CD8-positive, alpha-beta memory T cell (primary cell): ENCODE measurements at regions of chr2 and their contacts with region 1.

Region 1: DNA sequence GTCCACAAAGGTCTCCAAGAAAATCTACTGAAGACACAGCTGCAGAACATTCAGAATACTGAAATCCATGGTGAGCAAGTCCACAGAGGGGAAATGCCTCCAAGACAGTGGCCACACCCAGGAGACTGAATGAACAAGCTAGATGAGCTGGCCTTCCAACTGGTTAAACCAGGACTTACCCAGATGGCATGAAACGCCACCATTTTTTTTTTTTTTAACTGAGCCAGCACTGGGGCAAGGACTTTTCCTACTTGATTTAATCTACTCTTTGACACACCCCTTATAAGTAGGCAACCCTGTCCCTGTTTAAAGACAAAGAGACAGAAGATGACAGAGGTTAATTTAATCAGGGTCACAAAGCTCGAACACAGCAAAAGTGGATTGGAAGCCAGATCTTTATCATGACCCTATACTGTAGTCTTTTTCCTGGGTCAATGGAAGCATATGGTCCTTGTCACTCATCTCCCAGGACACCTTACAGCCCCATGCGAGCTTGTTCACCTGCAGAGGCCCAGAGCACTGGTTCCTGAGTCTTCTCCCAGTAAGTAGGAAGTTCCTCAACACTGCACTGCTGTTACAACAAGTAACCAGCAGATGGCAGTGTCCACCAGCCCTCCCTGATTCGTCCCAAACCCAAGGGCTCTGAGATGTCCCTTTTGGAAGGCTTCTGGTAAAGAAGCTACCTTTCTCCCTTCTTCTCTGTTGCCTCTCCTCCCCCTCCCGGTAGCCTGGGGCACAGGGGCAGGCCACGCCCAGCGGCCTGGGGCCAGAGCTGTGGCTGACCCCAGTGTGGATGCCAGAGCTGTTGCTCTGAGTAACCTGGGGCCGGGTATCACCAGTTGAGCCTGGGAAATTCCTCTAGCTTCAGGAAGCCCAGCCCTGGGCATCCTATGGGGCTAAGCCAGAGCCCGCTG is 5.6 kb upstream of the GDF7 start:
- DNase-seq: peak; percentile 35 to 77 (median 58)
- H3K4me3 ChIP-seq: no peak overlapping the region
- H3K4me3 Mint-ChIP-seq: no peak overlapping the region
- H3K27ac ChIP-seq: no peak overlapping the region
- H3K27ac Mint-ChIP-seq: peak overlapping the region in 1 of 8 donors; percentile 23
- H3K4me1 ChIP-seq: peaks cover 4% of the 10 kb centered on the region
- H3K4me1 Mint-ChIP-seq: peaks cover 4 to 16% (median 7%) of the 10 kb centered on the region in 3 donors
- H3K27me3 ChIP-seq: peaks cover 42% of the 10 kb centered on the region
- H3K27me3 Mint-ChIP-seq: peaks cover 39 to 81% of the 10 kb centered on the region in 2 donors

Region 2: GRCh38 chr2:20624884-20625485 is 36.3 kb before region 1 on chr2:
- CTCF ChIA-PET with region 1: no interaction called
- POLR2A ChIA-PET with region 1: no interaction called
- DNase-seq: peak in 1 of 5 donors; percentile 36
- H3K4me3 ChIP-seq: no peak overlapping the region
- H3K4me3 Mint-ChIP-seq: no peak overlapping the region
- H3K27ac ChIP-seq: no peak overlapping the region
- H3K27ac Mint-ChIP-seq: no peak overlapping the region
- H3K4me1 ChIP-seq: no peaks in the 10 kb centered on the region
- H3K4me1 Mint-ChIP-seq: no peaks in the 10 kb centered on the region
- H3K27me3 ChIP-seq: no peaks in the 10 kb centered on the region
- H3K27me3 Mint-ChIP-seq: no peaks in the 10 kb centered on the region

Region 3: DNA sequence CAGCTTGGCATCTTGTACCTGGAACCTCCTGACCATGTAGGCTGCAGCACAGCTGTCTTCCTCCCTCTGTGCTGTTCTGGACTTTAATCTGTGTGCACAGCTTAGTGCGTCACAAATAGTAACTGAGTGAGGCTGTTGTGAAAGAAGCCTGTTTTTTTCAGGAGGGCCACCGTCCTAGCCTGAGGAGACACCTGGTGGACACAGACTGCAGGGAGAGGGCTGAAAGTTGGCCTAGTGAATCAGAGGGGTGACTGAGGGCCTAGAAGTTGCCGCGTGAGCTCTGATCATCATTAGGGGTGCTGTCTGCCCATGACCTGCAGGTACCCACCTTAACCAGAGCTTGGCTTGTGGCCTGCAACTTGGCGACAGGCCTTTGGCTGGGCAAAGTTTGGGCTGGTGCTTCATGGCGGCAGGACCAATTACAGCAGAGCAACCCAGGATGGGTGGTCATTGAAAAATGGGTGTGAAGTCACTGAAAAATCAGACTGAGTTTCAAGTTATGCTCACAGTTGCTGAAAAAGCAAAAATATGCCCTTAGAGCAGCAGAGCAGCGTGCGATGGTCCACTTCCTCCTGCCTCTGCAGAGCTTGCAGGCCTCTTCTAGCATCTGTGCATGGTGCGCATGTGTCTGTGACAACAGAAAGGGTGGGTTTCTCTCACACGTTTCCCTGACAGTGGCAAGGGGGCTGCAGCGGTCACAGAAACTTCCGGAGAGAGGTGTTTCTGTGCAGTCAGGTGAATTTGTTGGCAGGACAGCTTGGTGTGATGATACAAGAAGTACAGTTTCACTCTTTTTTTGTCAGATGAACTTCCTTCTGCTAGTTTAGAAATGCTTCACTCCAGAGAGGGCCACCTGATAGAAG is 15.3 kb after region 1 on chr2:
- CTCF ChIA-PET with region 1: interaction called, 16 read pairs
- POLR2A ChIA-PET with region 1: no interaction called
- DNase-seq: no peak
- H3K4me3 ChIP-seq: no peak overlapping the region
- H3K4me3 Mint-ChIP-seq: no peak overlapping the region
- H3K27ac ChIP-seq: no peak overlapping the region
- H3K27ac Mint-ChIP-seq: peak overlapping the region in 2 of 8 donors; percentile 19 to 73
- H3K4me1 ChIP-seq: no peaks in the 10 kb centered on the region
- H3K4me1 Mint-ChIP-seq: peaks cover 0 to 5% (median 0%) of the 10 kb centered on the region in 3 donors
- H3K27me3 ChIP-seq: peaks cover 12% of the 10 kb centered on the region
- H3K27me3 Mint-ChIP-seq: peaks cover 10 to 25% of the 10 kb centered on the region in 2 donors

Region 4: GRCh38 chr2:20962939-20963557 is 301.7 kb after region 1 on chr2:
- CTCF ChIA-PET with region 1: interaction called, 105 read pairs
- POLR2A ChIA-PET with region 1: no interaction called
- DNase-seq: peak; percentile 33 to 62 (median 45)
- H3K4me3 ChIP-seq: no peak overlapping the region
- H3K4me3 Mint-ChIP-seq: no peak overlapping the region
- H3K27ac ChIP-seq: no peak overlapping the region
- H3K27ac Mint-ChIP-seq: no peak overlapping the region
- H3K4me1 ChIP-seq: no peaks in the 10 kb centered on the region
- H3K4me1 Mint-ChIP-seq: no peaks in the 10 kb centered on the region
- H3K27me3 ChIP-seq: no peaks in the 10 kb centered on the region
- H3K27me3 Mint-ChIP-seq: peaks cover 7 to 43% of the 10 kb centered on the region in 2 donors